Head of caudate nucleus (tissue), 42 donors: ENCODE measurements at regions of chr7 and their contacts with region 1.

Region 1: GRCh38 chr7:102236592-102237287 is 49.9 kb upstream of the SH2B2 start:
- DNase-seq: peak; percentile 41 to 89 (median 74)

Region 2: DNA sequence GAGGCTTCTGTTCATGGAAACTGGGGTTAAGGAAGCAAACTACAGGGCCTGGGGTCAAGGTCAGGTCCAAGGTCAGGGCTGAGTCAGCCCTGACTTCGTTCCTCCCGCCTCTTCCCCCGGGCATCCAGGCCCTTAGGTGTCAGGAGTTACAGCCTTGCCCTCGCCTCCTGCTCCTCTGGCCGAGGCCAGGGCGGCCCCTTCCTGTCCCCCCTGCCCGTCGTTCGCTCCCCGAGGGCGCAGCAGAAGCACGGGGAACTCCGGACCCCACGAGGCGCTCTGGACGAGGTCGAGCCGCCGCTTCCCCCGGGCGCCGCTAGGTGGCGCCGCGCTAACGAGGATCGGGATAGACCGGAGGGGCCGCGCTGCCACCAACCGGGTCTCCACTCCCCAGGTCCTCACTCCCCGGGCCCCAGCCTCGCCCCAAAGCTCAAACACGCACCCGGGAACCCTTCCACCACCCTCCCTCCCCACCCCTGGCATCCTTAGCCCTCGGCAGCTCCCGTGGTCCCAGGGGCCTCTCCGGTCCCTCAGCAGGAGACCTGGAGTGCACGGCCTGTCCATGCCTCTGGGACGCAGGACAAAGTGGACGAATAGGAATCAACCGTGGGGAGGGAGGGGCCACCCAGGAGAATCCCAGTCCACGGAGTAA is 548.4 kb before region 1 on chr7:
- intact Hi-C with region 1: loop called (anchors 10 kb)
- DNase-seq: peak; percentile 40 to 92 (median 78)